Dendritic cell treated with granulocyte-macrophage colony-stimulating factor and Interleukin-4, amounts not matched to agents 40 ng/mL and 50 ng/mL, for 4 days (primary cell): ENCODE measurements at regions of chr9 and their contacts with region 1.

Region 1: GRCh38 chr9:70484210-70485130 is 70.0 kb upstream of the KLF9 start:
- H3K4me3 Mint-ChIP-seq: no peak overlapping the region
- H3K27ac Mint-ChIP-seq: no peak overlapping the region
- H3K4me1 Mint-ChIP-seq: peaks cover 33% of the 10 kb centered on the region
- H3K27me3 Mint-ChIP-seq: no peaks in the 10 kb centered on the region

Region 2: DNA sequence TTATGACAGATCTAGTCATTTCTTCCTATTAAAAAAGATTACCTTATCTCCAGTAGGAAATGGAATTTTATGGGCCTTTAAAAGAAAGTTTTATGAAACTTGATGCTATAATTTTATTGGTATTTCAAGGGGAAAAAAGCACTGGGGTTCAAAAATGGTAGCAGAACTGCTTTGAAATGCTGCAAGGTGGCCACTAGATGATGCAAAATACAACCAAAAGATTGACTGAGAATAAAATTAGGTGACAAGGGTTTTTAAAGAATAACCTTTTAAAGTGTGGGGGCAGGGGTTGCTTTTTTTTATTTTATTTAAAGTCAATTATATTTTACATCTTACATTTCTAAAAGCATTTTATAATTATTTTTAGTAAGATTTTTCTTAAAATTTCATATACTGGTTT is 131.7 kb before region 1 on chr9:
- intact Hi-C with region 1: loop called (anchors 2 kb)
- H3K4me3 Mint-ChIP-seq: no peak overlapping the region
- H3K27ac Mint-ChIP-seq: no peak overlapping the region
- H3K4me1 Mint-ChIP-seq: no peaks in the 10 kb centered on the region
- H3K27me3 Mint-ChIP-seq: no peaks in the 10 kb centered on the region

Region 3: DNA sequence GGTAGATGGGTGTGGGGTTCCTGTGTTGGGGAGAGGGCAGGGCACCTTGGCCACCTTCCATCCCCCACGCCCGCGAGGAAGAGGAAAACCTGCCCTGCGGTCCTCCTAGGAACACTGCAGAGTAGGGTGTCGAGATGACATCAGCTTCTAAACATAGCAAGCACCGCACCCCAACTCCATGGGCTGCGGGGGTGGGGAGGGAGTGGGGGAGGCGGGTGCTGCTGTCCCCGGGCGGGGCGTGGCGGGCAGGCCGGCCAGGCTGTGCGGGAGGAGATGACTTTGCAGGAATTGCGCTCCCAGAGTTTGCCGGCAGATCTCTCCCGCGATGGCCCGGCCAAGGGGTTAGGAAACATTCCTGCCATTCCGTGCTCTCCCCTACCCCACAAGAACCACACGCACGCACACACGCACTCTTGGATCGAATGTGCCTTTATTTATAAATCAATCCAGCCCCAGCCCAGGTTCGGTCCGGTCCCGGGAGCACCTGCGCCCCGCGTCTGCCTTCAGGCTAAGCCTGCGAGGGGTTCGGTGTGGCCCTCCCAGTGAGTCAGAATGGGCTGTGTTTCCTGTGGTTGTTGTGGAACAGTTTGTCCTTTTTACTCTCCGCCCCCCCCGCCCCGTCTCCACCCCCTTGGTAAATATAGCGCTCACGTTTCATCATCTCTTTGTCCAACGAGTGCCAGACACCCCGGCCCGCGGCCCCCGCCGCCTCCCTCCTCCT is 64.8 kb before region 1 on chr9:
- intact Hi-C with region 1: loop called (anchors 5 kb)
- H3K4me3 Mint-ChIP-seq: peak overlapping the region; percentile 92
- H3K27ac Mint-ChIP-seq: peak overlapping the region; percentile 96
- H3K4me1 Mint-ChIP-seq: peaks cover 49% of the 10 kb centered on the region
- H3K27me3 Mint-ChIP-seq: no peaks in the 10 kb centered on the region

Region 4: GRCh38 chr9:70602321-70603019 is 118.0 kb after region 1 on chr9:
- intact Hi-C with region 1: loop called (anchors 2 kb)
- H3K4me3 Mint-ChIP-seq: no peak overlapping the region
- H3K27ac Mint-ChIP-seq: no peak overlapping the region
- H3K4me1 Mint-ChIP-seq: peaks cover 21% of the 10 kb centered on the region
- H3K27me3 Mint-ChIP-seq: no peaks in the 10 kb centered on the region